ENCODE measurements at regions of chr4 and their contacts with region 1.

Region 1: GRCh38 chr4:154506253-154506652 is 14.7 kb upstream of the DCHS2 start:
- DNase-seq: no peak
- H3K4me3 ChIP-seq: no peak overlapping the region
- H3K27ac ChIP-seq: no peak overlapping the region
- H3K4me1 ChIP-seq: no peaks in the 10 kb centered on the region
- H3K27me3 ChIP-seq: no peaks in the 10 kb centered on the region
- CTCF ChIP-seq: no peak

Region 2: GRCh38 chr4:154332681-154333421 is 173.4 kb before region 1 on chr4:
- intact Hi-C with region 1: loop called (anchors 10 kb)
- DNase-seq: peak; percentile 20
- H3K4me3 ChIP-seq: peak overlapping the region; percentile 19
- H3K27ac ChIP-seq: no peak overlapping the region
- H3K4me1 ChIP-seq: no peaks in the 10 kb centered on the region
- H3K27me3 ChIP-seq: peaks cover 4% of the 10 kb centered on the region
- CTCF ChIP-seq: no peak

Region 3: GRCh38 chr4:154399259-154399974 is 106.8 kb before region 1 on chr4:
- intact Hi-C with region 1: loop called (anchors 5 kb)
- DNase-seq: no peak
- H3K4me3 ChIP-seq: no peak overlapping the region
- H3K27ac ChIP-seq: no peak overlapping the region
- H3K4me1 ChIP-seq: no peaks in the 10 kb centered on the region
- H3K27me3 ChIP-seq: no peaks in the 10 kb centered on the region
- CTCF ChIP-seq: no peak

Region 4: DNA sequence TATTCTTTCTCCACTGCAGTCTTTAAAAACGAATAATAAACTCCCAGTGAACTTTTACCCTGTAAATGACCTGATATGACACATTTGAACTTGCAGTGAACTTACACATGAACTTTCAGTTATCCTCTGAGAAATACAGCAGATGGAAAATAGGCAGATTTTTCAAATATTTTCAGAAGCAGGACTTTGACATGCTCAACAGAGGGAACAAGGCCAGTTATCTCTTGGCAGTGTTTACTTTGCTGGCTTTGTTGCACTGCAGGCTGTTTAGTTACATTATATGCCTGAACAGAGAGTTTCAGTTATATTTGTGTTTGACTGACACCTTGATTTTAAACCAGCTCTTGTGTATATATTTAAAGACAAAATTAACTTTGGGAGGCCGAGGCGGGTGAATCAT is 153.8 kb after region 1 on chr4:
- intact Hi-C with region 1: no loop called
- DNase-seq: no peak
- H3K4me3 ChIP-seq: no peak overlapping the region
- H3K27ac ChIP-seq: no peak overlapping the region
- H3K4me1 ChIP-seq: no peaks in the 10 kb centered on the region
- H3K27me3 ChIP-seq: no peaks in the 10 kb centered on the region
- CTCF ChIP-seq: no peak

Region 5: GRCh38 chr4:155025762-155026457 is 519.7 kb after region 1 on chr4:
- intact Hi-C with region 1: no loop called
- DNase-seq: peak; percentile 66
- H3K4me3 ChIP-seq: no peak overlapping the region
- H3K27ac ChIP-seq: no peak overlapping the region
- H3K4me1 ChIP-seq: no peaks in the 10 kb centered on the region
- H3K27me3 ChIP-seq: no peaks in the 10 kb centered on the region
- CTCF ChIP-seq: peak; percentile 49